ENCODE measurements at regions of chr6 and their contacts with region 1.

Region 1: DNA sequence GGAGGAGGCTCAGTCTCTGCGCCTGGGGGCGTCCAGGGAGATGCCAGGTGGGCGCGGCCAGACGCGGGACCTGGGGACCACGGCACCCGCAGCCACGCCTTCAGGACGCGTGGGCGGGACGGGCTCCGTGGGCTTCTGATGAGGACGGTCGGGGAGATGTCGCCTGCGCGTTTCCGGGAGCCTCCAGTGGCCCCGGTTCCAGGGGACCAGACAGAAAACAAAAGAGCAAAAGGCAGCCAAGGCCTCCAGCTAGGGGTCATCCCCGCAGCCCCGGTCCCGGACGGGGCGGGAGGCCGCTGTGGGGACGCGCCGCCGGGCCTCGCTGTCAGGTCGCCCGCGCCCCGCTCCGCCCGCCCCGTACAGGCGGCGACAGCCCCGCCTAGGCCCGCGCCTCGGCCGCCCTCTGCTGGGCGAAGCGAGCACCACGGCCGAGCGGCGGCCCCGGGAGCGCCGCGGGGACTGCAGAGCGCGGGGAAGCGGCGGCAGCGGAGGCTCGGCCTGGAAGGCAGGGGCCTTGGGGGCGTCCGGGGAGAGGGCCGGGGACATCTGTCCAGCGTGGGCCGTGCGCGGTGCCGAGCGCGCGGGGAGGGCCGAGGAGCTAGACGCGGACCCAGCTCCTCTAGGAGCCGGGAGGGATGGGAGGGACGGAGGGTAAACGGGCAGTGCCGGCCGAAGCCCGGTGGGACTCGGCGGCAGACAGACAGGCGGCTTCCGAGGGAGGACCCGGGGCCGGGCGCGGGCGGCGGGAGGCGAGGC is 48.7 kb downstream of the TMEM242 start:
- DNase-seq: peak; percentile 77 to 85
- ATAC-seq: peak; percentile 96 to 99 (median 98)
- H3K4me3 ChIP-seq: peak overlapping the region; percentile 79
- H3K27ac ChIP-seq: peak overlapping the region; percentile 50
- H3K4me1 ChIP-seq: peaks cover 8% of the 10 kb centered on the region
- H3K27me3 ChIP-seq: no peaks in the 10 kb centered on the region
- CTCF ChIP-seq: peak; percentile 90

Region 2: GRCh38 chr6:157034436-157035230 is 240.0 kb before region 1 on chr6:
- intact Hi-C with region 1: loop called (anchors 10 kb)
- DNase-seq: no peak
- ATAC-seq: peak in 2 of 4 donors; percentile 49 to 67
- H3K4me3 ChIP-seq: no peak overlapping the region
- H3K27ac ChIP-seq: no peak overlapping the region
- H3K4me1 ChIP-seq: peaks cover 44% of the 10 kb centered on the region
- H3K27me3 ChIP-seq: no peaks in the 10 kb centered on the region
- CTCF ChIP-seq: peak; percentile 59

Region 3: DNA sequence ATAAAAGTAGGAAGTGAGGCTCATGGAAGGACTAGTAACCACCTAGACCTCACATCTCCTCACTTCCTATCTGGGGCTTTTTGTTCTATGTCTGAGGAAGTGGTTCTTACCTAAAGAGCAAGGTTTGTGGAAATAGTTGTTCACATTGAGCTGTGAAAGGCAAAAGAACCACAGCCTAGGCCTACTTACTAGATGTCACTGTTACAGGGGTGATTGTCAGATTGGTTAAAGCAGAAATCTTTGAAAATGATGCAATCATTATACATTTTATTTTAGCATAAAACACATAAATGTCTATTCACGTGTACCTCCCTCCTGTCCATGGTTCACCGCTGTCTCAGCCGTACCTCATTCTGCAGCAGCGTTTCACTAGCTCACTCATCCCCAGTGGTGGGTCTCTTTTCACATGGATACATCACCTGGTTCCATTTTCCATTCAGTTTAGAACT is 220.1 kb before region 1 on chr6:
- intact Hi-C with region 1: no loop called
- DNase-seq: no peak
- ATAC-seq: no peak
- H3K4me3 ChIP-seq: no peak overlapping the region
- H3K27ac ChIP-seq: no peak overlapping the region
- H3K4me1 ChIP-seq: peaks cover 14% of the 10 kb centered on the region
- H3K27me3 ChIP-seq: no peaks in the 10 kb centered on the region
- CTCF ChIP-seq: no peak

Region 4: DNA sequence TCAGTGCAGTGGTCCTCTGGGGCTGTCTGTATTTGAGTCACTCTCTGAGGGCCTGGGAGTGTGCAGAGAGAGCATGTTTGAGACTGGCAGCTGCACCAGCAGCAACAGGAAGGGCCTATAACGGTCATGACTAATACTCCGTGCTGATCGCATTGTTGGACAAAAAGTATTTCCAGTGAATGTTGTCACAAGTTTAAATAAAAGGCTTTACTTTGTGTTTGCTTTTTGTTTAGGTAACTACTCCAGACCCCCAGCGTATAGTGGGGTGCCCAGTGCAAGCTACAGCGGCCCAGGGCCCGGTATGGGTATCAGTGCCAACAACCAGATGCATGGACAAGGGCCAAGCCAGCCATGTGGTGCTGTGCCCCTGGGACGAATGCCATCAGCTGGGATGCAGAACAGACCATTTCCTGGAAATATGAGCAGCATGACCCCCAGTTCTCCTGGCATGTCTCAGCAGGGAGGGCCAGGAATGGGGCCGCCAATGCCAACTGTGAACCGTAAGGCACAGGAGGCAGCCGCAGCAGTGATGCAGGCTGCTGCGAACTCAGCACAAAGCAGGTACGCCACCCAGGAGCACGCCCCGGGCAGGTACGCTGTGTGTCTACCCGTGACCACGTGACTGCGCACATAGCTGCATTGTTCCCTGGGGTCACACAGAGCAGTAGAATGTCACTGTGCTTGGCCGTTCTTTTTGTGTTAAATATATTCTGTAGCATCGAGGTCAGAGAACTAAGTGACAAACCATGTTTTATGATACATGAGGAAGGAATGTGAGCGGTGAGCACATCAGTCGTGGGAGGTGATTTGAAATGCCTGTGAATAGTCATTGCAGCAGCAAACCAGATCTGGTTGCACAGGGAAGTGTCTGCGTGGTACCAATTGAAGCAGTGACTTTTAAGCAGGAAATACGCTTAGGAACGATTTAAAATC is 126.0 kb before region 1 on chr6:
- intact Hi-C with region 1: loop called (anchors 10 kb)
- DNase-seq: peak; percentile 62 to 76
- ATAC-seq: peak; percentile 84 to 92 (median 87)
- H3K4me3 ChIP-seq: no peak overlapping the region
- H3K27ac ChIP-seq: peak overlapping the region; percentile 85
- H3K4me1 ChIP-seq: peaks cover 33% of the 10 kb centered on the region
- H3K27me3 ChIP-seq: no peaks in the 10 kb centered on the region
- CTCF ChIP-seq: no peak

Region 5: DNA sequence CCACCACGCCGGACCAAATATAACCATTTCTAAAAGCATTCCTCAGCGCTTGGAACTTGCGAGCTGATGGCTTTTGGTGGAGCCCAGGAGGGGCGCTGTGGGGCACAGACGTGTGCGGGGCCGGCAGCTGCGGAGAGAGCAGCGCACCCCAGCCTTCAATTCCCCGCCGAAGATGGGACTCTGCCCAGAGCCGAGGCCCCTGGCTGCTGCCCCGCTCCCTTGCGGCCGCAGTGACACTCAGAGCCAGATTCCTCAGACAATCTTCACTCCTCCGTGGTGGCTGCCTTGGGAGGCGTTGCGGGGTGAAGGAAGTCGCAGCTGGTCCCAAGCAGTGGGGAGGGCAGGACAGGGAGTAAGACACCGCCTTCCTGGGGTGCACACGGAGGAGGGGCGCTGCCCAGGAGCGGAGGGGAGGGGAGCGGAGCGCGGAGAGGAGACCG is 39.0 kb before region 1 on chr6:
- intact Hi-C with region 1: loop called (anchors 5 kb)
- DNase-seq: peak; percentile 68 to 83
- ATAC-seq: peak; percentile 71 to 81 (median 72)
- H3K4me3 ChIP-seq: peak overlapping the region; percentile 72
- H3K27ac ChIP-seq: peak overlapping the region; percentile 32
- H3K4me1 ChIP-seq: peaks cover 26% of the 10 kb centered on the region
- H3K27me3 ChIP-seq: no peaks in the 10 kb centered on the region
- CTCF ChIP-seq: peak; percentile 61